ENCODE measurements at regions of chr1 and their contacts with region 1.

Region 1: GRCh38 chr1:44213222-44214112 is at the start of gene DMAP1:
- DNase-seq: peak; percentile 75 to 95 (median 86)
- ATAC-seq: peak; percentile 83
- H3K4me3 ChIP-seq: peak within 1 kb of the TSS; percentile 91
- H3K4me3 Mint-ChIP-seq: peak within 1 kb of the TSS; percentile 95
- H3K27ac ChIP-seq: peak within 1 kb of the TSS; percentile 61 to 74
- H3K27ac Mint-ChIP-seq: peak within 1 kb of the TSS; percentile 83
- H3K4me1 ChIP-seq: peaks cover 18% of the 10 kb centered on the region
- H3K4me1 Mint-ChIP-seq: peaks cover 42% of the 10 kb centered on the region
- H3K27me3 ChIP-seq: no peaks in the 10 kb centered on the region
- H3K27me3 Mint-ChIP-seq: no peaks in the 10 kb centered on the region
- CTCF ChIP-seq: no peak
- total RNA-seq, gene DMAP1: 59.0 to 59.5 TPM

Region 2: GRCh38 chr1:43650310-43651085 is 563.0 kb before region 1 on chr1:
- CTCF ChIA-PET with region 1: no interaction called
- POLR2A ChIA-PET with region 1: interaction called, 4 read pairs
- intact Hi-C with region 1: loop called in 1 of 2 experiments (anchors 10 kb)
- DNase-seq: peak in 8 of 9 experiments; percentile 74 to 97 (median 89)
- ATAC-seq: peak; percentile 71
- H3K4me3 ChIP-seq: peak overlapping the region; percentile 87 to 92
- H3K4me3 Mint-ChIP-seq: peak overlapping the region; percentile 100
- H3K27ac ChIP-seq: peak overlapping the region; percentile 49 to 86
- H3K27ac Mint-ChIP-seq: peak overlapping the region; percentile 97
- H3K4me1 ChIP-seq: peaks cover 17% of the 10 kb centered on the region
- H3K4me1 Mint-ChIP-seq: peaks cover 41% of the 10 kb centered on the region
- H3K27me3 ChIP-seq: no peaks in the 10 kb centered on the region
- H3K27me3 Mint-ChIP-seq: no peaks in the 10 kb centered on the region
- CTCF ChIP-seq: no peak

Region 3: DNA sequence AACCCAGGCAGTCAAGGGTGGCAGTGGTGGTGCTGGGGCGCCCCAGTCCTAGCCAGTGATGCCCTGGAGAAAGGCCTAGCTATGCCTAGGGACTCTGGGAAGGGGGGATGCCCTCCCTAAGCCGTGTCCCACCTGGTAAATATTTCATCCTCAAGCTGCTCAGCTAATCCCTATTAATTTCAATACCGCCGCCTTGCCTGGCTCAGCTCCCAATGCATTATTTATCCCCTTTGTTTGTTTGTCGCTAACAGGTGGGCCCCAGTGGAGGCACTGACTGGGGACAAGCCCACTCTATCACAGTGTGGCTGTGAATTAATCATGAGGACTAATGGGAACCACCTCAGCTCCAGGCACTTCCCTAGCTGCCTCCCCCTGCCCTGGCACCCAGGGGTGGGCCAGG is 22.3 kb after region 1 on chr1:
- CTCF ChIA-PET with region 1: interaction called, 15 read pairs
- POLR2A ChIA-PET with region 1: no interaction called
- intact Hi-C with region 1: no loop called
- DNase-seq: no peak
- ATAC-seq: no peak
- H3K4me3 ChIP-seq: no peak overlapping the region
- H3K4me3 Mint-ChIP-seq: no peak overlapping the region
- H3K27ac ChIP-seq: no peak overlapping the region
- H3K27ac Mint-ChIP-seq: no peak overlapping the region
- H3K4me1 ChIP-seq: peaks cover 5% of the 10 kb centered on the region
- H3K4me1 Mint-ChIP-seq: peaks cover 13% of the 10 kb centered on the region
- H3K27me3 ChIP-seq: no peaks in the 10 kb centered on the region
- H3K27me3 Mint-ChIP-seq: no peaks in the 10 kb centered on the region
- CTCF ChIP-seq: no peak

Region 4: GRCh38 chr1:44594871-44595746 is 381.6 kb after region 1 on chr1:
- CTCF ChIA-PET with region 1: interaction called, 4 read pairs
- POLR2A ChIA-PET with region 1: no interaction called
- intact Hi-C with region 1: loop called (anchors 1 to 2 kb)
- DNase-seq: peak; percentile 50 to 85 (median 77)
- ATAC-seq: peak; percentile 81
- H3K4me3 ChIP-seq: no peak overlapping the region
- H3K4me3 Mint-ChIP-seq: no peak overlapping the region
- H3K27ac ChIP-seq: no peak overlapping the region
- H3K27ac Mint-ChIP-seq: no peak overlapping the region
- H3K4me1 ChIP-seq: no peaks in the 10 kb centered on the region
- H3K4me1 Mint-ChIP-seq: no peaks in the 10 kb centered on the region
- H3K27me3 ChIP-seq: no peaks in the 10 kb centered on the region
- H3K27me3 Mint-ChIP-seq: peaks cover 8% of the 10 kb centered on the region
- CTCF ChIP-seq: peak; percentile 85

Region 5: DNA sequence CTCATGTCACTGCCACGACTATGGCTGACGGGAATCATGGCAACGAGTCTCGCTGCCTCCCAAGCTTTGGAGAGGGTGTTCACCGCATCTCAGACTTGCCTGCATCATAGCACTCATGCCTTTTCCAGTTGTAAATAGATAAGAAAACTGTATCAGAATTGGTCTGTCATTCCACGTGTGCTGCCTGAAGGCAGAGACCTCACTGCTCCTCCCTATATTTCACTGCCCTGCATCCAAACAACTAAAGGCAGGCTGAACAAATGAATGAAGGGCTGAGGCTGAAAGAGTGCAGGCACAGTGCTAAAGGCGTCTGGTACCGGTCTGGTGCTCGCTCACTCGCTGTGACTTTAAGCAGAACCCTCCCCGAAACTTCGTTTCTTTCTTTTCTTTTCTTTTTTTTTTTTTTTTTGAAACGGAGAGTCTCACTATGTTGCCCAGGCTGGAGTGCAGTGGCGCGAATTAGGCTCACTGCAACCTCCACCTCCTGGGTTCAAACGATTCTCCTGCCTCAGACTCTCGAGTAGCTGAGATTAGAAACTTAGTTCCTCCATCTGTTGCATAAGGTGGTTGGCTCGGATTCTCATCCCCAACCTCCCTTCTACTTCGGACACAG is 772.4 kb after region 1 on chr1:
- CTCF ChIA-PET with region 1: no interaction called
- POLR2A ChIA-PET with region 1: no interaction called
- intact Hi-C with region 1: loop called in 1 of 2 experiments (anchors 10 kb)
- DNase-seq: no peak
- ATAC-seq: no peak
- H3K4me3 ChIP-seq: peak overlapping the region; percentile 70 to 85
- H3K4me3 Mint-ChIP-seq: peak overlapping the region; percentile 97
- H3K27ac ChIP-seq: peak overlapping the region; percentile 31 to 42
- H3K27ac Mint-ChIP-seq: peak overlapping the region; percentile 93
- H3K4me1 ChIP-seq: peaks cover 15% of the 10 kb centered on the region
- H3K4me1 Mint-ChIP-seq: peaks cover 30% of the 10 kb centered on the region
- H3K27me3 ChIP-seq: no peaks in the 10 kb centered on the region
- H3K27me3 Mint-ChIP-seq: no peaks in the 10 kb centered on the region
- CTCF ChIP-seq: no peak